Gastrocnemius medialis (tissue), 4 donors: ENCODE measurements at regions of chr3 and their contacts with region 1.

Region 1: DNA sequence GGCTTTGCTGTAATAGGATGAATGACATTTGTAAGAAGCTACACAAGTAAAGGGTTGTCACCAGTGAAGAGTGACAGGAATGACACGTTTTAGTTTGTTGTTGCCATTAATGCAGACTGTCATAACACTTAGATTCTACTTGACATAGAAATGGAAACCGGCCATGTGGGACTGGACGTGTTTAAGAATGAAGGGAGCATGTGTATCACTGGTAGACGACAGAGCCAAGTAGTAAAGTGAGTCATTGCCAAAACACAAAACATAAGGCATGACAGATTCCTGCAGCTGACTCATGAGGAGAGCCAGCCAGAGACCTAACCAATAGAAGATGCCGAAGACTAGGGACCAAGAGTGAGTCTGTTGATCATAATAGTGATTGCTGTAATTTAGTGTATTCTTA is 106.2 kb upstream of the PLAAT1 start:
- DNase-seq: no peak
- ATAC-seq: peak in 1 of 2 donors; percentile 88
- H3K4me3 ChIP-seq: no peak overlapping the region
- H3K27ac ChIP-seq: no peak overlapping the region
- H3K4me1 ChIP-seq: peaks cover 0 to 12% of the 10 kb centered on the region in 2 donors
- H3K27me3 ChIP-seq: no peaks in the 10 kb centered on the region
- CTCF ChIP-seq: no peak
- POLR2A ChIP-seq: no peak

Region 2: DNA sequence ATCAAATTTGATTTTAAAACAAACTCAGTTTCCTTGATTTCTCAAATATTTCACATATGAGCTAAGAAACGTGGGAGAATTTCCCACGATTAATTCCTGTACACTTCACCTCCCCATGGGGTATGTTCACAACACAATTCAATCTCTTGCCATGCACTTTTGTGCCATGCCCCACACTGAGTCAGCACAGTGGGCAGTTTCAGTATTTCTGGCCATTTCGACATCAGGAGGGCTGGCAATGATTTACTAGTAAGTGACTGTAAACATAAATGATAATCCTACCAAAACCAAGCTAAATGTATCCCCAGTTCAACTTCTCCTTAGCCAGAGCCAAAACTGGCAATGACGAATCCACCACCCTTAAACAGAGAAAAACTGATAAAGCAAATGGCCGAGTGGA is 701.1 kb before region 1 on chr3:
- in situ Hi-C with region 1: no loop called
- intact Hi-C with region 1: no loop called
- DNase-seq: no peak
- ATAC-seq: no peak
- H3K4me3 ChIP-seq: no peak overlapping the region
- H3K27ac ChIP-seq: no peak overlapping the region
- H3K4me1 ChIP-seq: no peaks in the 10 kb centered on the region
- H3K27me3 ChIP-seq: no peaks in the 10 kb centered on the region
- CTCF ChIP-seq: no peak
- POLR2A ChIP-seq: no peak

Region 3: DNA sequence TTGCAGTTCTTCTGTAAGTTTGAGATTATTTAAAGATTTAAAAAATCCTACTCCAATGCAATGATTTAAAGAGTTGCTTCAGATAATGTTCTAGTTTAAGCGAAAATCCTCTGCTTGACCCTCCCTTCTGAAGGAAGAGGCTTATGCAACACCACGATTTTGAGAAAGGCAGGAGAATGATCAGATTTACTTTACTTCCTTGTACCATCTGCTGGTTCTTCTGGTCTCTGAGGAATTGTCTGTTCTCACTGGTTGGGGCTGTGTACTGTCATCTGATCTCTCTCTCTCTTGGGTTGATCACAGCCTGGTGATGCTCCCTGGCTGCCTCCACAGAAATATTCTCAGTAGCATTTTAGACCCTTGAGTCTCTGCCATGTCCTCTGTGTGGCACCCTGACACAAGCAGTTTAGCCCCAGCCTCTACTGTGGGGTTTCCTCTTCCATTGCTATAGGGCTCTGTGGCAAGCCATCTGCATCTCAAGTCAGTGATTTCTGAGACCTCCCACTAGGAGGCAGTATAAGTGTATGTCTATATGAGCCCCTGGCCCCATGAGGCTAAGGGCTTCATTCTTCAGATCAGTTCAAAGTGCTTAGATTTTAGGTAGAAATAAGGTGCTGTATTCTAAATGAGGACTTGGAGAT is 55.4 kb after region 1 on chr3:
- in situ Hi-C with region 1: loop called in 1 of 4 experiments (anchors 5 kb)
- intact Hi-C with region 1: no loop called
- DNase-seq: peak in 1 of 2 donors; percentile 26
- ATAC-seq: peak; percentile 58 to 95
- H3K4me3 ChIP-seq: no peak overlapping the region
- H3K27ac ChIP-seq: no peak overlapping the region
- H3K4me1 ChIP-seq: peaks cover 0 to 5% of the 10 kb centered on the region in 2 donors
- H3K27me3 ChIP-seq: no peaks in the 10 kb centered on the region
- CTCF ChIP-seq: peak; percentile 32 to 55 (median 37)
- POLR2A ChIP-seq: no peak

Region 4: GRCh38 chr3:193240850-193241706 is 106.2 kb after region 1 on chr3 and contains the start of gene PLAAT1:
- in situ Hi-C with region 1: no loop called
- intact Hi-C with region 1: no loop called
- DNase-seq: peak; percentile 61 to 79
- ATAC-seq: peak; percentile 69 to 79
- H3K4me3 ChIP-seq: peak within 1 kb of the TSS; percentile 65 to 76 (median 72)
- H3K27ac ChIP-seq: peak within 1 kb of the TSS; percentile 96 to 98 (median 97)
- H3K4me1 ChIP-seq: peaks cover 16 to 31% of the 10 kb centered on the region in 2 donors
- H3K27me3 ChIP-seq: no peaks in the 10 kb centered on the region
- CTCF ChIP-seq: no peak
- POLR2A ChIP-seq: peak; percentile 82 to 87
- total RNA-seq, gene PLAAT1: 6.8 to 25.0 (median 18.8) TPM

Region 5: DNA sequence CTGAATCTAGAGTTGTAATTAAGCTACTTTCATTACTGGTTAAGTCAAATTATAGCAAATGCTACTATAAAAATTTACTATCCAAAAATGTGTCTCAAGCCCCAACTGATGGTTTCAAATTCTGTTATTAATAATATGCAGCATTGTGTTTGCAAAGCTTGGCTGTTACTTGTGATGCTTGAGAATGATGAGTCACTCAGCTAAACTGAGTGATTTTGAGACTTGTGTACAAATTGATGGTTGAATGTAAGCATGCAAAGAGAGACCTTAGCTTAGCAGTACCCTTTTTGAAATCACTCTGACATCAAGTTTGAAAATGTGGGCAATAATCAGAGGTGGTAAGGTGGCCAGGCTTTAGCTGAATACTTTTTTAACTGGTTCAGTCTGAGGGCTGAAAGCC is 485.8 kb after region 1 on chr3:
- in situ Hi-C with region 1: no loop called
- intact Hi-C with region 1: no loop called
- DNase-seq: no peak
- ATAC-seq: no peak
- H3K4me3 ChIP-seq: no peak overlapping the region
- H3K27ac ChIP-seq: no peak overlapping the region
- H3K4me1 ChIP-seq: no peaks in the 10 kb centered on the region
- H3K27me3 ChIP-seq: no peaks in the 10 kb centered on the region
- CTCF ChIP-seq: no peak
- POLR2A ChIP-seq: no peak

Region 6: DNA sequence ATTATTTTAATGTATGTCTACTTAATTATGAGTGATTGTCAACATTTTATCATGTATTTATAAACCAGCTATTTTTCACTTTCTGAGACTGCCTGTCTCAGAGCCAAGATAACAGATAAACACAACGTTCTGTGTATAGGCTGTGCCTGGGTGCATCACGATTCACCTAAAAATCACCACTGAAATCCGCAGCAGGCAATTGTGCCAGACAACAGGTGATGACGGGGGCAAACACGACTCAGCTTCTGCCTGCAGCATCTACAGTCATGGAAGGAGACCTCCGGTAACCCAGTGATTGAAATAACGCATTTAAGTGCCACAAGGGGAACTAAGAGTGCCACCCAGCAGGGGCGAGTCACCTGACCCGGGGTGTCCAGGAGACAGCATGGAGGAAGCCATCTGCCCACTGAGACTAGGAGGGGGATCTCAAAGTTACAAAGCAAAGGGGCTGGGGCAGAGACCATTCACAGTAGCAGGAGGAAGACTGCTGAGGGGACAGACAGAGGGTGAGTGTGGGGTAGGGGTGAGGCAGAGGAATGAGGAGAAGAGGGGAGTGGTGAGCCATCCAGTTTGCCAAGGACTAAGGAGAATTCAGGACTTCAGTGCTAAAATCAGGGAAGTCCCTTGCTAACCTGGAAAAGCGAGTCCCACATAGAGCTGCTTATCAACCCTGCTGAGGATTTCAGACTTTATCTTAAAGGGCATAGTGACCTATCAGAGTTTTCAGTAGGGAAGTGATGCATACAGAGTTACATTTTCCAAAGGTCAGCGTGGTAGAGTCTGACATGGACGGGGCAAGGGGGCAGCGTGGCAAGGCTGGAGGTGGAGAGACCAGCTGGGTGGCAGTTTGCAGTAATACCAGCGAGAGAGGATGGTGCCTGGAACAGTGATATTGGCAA is 744.4 kb after region 1 on chr3:
- in situ Hi-C with region 1: no loop called
- intact Hi-C with region 1: no loop called
- DNase-seq: no peak
- ATAC-seq: no peak
- H3K4me3 ChIP-seq: no peak overlapping the region
- H3K27ac ChIP-seq: no peak overlapping the region
- H3K4me1 ChIP-seq: peaks cover 0 to 13% of the 10 kb centered on the region in 2 donors
- H3K27me3 ChIP-seq: no peaks in the 10 kb centered on the region
- CTCF ChIP-seq: no peak
- POLR2A ChIP-seq: no peak